RWPE1 (cell line): ENCODE measurements at regions of chr4 and their contacts with region 1.

Region 1: GRCh38 chr4:143512961-143513305 is 569 bp upstream of the SMARCA5 start:
- DNase-seq: no peak
- H3K27ac ChIP-seq: peak overlapping the region; percentile 98
- CTCF ChIP-seq: no peak

Region 2: DNA sequence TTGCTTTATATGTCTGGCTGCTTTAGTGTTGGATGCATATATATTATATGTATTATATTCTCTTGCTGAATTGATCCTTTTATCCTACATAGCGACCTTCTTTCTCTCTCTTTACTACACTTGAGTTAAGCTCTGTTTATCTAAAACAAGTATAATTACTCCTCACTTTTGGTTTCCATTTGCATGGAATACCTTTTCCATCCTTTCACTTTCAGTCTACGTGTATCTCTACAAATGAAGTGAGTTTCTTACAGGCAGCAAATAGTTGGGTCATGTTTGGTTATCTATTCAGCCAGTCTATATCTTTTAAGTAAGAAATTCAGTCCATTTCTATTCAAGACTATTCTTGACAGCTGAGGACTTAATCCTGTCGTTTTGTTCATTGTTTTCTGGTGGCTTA is 495.7 kb before region 1 on chr4:
- CTCF ChIA-PET with region 1: no interaction called
- POLR2A ChIA-PET with region 1: interaction called, 11 read pairs
- DNase-seq: no peak
- H3K27ac ChIP-seq: no peak overlapping the region
- CTCF ChIP-seq: no peak